Activated T-helper 2 cell treated with anti-CD3 and anti-CD28 coated beads, Interferon-gamma antibody, Interleukin-2, Interleukin-4, amounts not matched to agents 10 μg/mL and 5 μg/mL and 100 μg/mL, durations not matched to agents 14 hours and 24 hours and 36 hours (primary cell): ENCODE measurements at regions of chr2 and their contacts with region 1.

Region 1: GRCh38 chr2:12507295-12507694 is 209.4 kb upstream of the TRIB2 start:
- DNase-seq: peak; percentile 43
- H3K4me3 Mint-ChIP-seq: no peak overlapping the region
- H3K27ac Mint-ChIP-seq: peak overlapping the region; percentile 13
- H3K4me1 Mint-ChIP-seq: peaks cover 71% of the 10 kb centered on the region
- H3K27me3 Mint-ChIP-seq: no peaks in the 10 kb centered on the region

Region 2: GRCh38 chr2:12176623-12177454 is 330.5 kb before region 1 on chr2:
- intact Hi-C with region 1: loop called (anchors 10 kb)
- DNase-seq: no peak
- H3K4me3 Mint-ChIP-seq: no peak overlapping the region
- H3K27ac Mint-ChIP-seq: no peak overlapping the region
- H3K4me1 Mint-ChIP-seq: peaks cover 24% of the 10 kb centered on the region
- H3K27me3 Mint-ChIP-seq: peaks cover 14% of the 10 kb centered on the region

Region 3: DNA sequence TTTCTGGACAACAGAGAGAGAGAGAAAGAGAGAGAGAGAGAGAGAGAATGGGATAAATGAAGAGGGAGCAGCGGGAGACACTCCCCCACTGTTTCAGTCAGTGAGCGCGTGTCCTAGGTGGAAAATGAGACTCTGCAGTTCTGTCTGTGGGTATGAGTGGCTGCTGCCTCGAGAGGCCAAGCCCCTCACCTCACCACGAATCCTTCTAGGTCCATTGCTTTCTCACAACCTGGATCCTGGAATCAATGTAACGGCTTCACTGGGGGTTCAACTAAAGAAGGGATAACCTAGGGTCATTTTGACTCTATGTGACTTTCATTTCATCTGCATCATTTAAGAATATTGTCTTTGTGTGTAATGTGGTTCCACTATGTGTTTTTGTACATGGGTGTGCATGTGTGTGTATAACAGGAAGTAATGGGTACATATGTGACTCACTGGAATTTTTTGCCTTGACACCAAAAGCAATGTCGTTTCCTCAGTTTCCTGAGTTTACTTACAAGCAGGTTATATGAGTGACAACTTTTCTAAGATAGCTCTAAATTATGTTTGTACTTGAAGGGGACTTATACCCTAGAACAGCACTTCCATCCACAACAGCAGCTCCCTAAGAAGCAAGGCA is 11.9 kb before region 1 on chr2:
- intact Hi-C with region 1: no loop called
- DNase-seq: no peak
- H3K4me3 Mint-ChIP-seq: no peak overlapping the region
- H3K27ac Mint-ChIP-seq: peak overlapping the region; percentile 41
- H3K4me1 Mint-ChIP-seq: peaks cover 59% of the 10 kb centered on the region
- H3K27me3 Mint-ChIP-seq: no peaks in the 10 kb centered on the region

Region 4: DNA sequence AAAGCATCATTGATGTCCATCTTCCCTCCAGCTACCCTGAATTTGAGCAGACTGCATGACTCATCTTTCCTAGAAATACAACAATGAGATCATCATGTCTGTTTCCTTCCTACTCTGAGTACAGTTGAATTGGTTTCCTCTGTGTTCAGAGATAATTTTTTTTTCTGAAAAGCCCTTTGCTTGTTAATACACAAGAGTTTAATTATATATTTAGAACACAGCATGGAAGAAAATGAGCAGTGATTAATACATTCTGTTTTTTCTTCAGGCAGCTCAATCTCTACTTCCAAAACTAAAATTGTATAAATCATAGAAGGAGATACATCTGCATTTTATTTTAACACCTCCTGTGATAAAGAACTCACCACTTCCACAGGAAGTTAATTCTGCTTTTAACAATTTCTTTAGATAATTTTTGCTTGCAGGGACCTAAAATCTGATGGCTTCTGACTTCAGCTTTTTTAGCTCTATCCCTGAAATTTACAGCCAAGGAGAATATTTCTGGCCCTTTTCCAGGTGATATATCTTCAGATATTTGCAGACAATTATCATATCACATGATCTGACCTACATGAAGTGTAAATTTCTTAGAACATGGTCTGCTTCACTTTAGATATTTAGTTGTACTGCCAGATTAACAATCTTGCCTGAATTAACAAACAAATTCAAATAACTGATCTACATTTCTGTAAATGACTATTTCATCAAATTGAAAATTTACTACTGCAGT is 458.4 kb after region 1 on chr2:
- intact Hi-C with region 1: loop called (anchors 10 kb)
- DNase-seq: no peak
- H3K4me3 Mint-ChIP-seq: peak overlapping the region; percentile 2
- H3K27ac Mint-ChIP-seq: peak overlapping the region; percentile 48
- H3K4me1 Mint-ChIP-seq: peaks cover 49% of the 10 kb centered on the region
- H3K27me3 Mint-ChIP-seq: peaks cover 11% of the 10 kb centered on the region